Naive thymus-derived CD4-positive, alpha-beta T cell (primary cell): ENCODE measurements at regions of chr16 and their contacts with region 1.

Region 1: GRCh38 chr16:81035398-81035974 is at the start of gene ATMIN:
- DNase-seq: peak; percentile 80 to 96 (median 90)
- ATAC-seq: peak; percentile 100
- H3K4me3 ChIP-seq: peak within 1 kb of the TSS; percentile 52
- H3K4me3 Mint-ChIP-seq: peak within 1 kb of the TSS; percentile 79 to 92 (median 89)
- H3K27ac ChIP-seq: peak within 1 kb of the TSS; percentile 69
- H3K27ac Mint-ChIP-seq: peak within 1 kb of the TSS; percentile 29 to 87 (median 77)
- H3K4me1 ChIP-seq: peaks cover 20 to 24% of the 10 kb centered on the region in 2 donors
- H3K4me1 Mint-ChIP-seq: peaks cover 16 to 44% (median 39%) of the 10 kb centered on the region in 7 donors
- H3K27me3 ChIP-seq: no peaks in the 10 kb centered on the region
- H3K27me3 Mint-ChIP-seq: no peaks in the 10 kb centered on the region
- total RNA-seq, gene ATMIN: 29.1 to 46.9 (median 35.3) TPM

Region 2: DNA sequence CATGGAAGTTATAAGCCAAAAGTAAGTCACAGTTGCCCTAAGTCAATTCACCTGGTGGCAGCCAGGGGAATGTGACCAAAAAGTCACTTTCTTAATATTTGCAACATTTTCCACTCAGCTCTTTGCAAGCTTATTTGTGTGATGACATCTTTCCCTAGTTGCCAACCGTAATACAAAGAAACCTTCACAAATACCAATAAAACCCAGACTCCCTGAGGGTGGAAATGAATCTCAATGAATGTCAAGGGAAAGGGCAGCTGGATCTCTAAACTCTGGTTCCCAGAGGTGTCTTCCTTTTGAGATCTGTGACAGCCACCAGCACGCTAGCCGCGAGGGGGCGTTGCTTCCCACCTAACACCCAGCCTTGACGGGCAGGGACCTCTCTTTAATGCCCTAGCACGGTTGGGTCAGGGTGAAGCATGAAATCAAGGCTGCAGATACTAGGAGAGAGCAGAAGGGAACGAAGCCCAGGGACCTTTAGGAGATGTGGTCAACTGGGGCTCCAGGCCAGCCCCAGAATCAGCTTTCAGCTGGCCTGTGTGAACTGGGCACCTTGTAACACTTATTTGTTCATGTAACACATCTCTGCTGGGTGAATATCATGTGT is 111.0 kb before region 1 on chr16:
- CTCF ChIA-PET with region 1: no interaction called
- POLR2A ChIA-PET with region 1: no interaction called
- intact Hi-C with region 1: loop called in 1 of 2 experiments (anchors 1 kb)
- DNase-seq: peak in 4 of 9 donors; percentile 5 to 37 (median 14)
- ATAC-seq: no peak
- H3K4me3 ChIP-seq: no peak overlapping the region
- H3K4me3 Mint-ChIP-seq: no peak overlapping the region
- H3K27ac ChIP-seq: no peak overlapping the region
- H3K27ac Mint-ChIP-seq: no peak overlapping the region
- H3K4me1 ChIP-seq: no peaks in the 10 kb centered on the region
- H3K4me1 Mint-ChIP-seq: no peaks in the 10 kb centered on the region
- H3K27me3 ChIP-seq: no peaks in the 10 kb centered on the region
- H3K27me3 Mint-ChIP-seq: peaks cover 0 to 29% (median 22%) of the 10 kb centered on the region in 5 donors

Region 3: GRCh38 chr16:80947708-80948620 is 87.5 kb before region 1 on chr16:
- CTCF ChIA-PET with region 1: no interaction called
- POLR2A ChIA-PET with region 1: no interaction called
- intact Hi-C with region 1: no loop called
- DNase-seq: no peak
- ATAC-seq: no peak
- H3K4me3 ChIP-seq: no peak overlapping the region
- H3K4me3 Mint-ChIP-seq: no peak overlapping the region
- H3K27ac ChIP-seq: no peak overlapping the region
- H3K27ac Mint-ChIP-seq: no peak overlapping the region
- H3K4me1 ChIP-seq: no peaks in the 10 kb centered on the region
- H3K4me1 Mint-ChIP-seq: peaks cover 0 to 3% (median 0%) of the 10 kb centered on the region in 7 donors
- H3K27me3 ChIP-seq: no peaks in the 10 kb centered on the region
- H3K27me3 Mint-ChIP-seq: peaks cover 2 to 23% (median 13%) of the 10 kb centered on the region in 5 donors

Region 4: DNA sequence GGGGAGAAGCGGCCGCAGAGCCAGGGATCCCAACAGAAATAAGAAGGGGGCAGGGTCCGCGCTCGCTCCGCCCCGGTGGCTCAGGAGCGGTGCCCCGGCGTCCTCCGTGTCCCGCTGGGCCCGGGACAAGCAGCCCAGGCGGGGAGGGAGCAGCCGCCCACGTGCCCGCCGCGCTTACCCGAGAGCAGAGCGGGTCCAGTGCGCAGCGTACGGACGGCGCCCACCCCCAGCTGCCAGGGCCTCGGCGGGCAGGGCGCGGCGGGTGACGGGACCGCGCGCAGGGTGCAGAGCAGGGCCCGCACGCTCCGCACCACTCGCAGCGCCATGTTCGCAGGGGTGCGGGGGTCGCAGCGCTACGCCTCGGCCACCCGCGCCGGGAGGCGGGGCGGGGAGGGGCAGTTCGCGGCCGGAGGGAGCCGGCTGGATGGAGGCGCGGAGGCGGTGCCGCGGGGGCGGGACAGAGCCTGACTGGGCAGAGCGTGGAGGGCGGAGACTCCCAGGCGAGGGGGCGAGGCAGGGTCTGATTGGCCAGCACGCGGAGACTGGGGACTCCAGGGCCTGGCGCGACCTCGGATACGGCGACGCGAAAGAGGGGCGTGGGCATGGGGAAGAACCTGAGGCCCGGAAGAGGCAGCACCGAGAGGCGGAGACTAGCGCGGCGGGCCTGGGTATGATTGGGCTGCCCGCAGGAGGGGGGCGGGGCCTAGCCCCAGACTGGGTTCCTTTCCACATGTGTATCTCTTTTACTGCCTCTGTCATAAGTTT is 60.6 kb after region 1 on chr16 and contains the start of gene GCSH:
- CTCF ChIA-PET with region 1: interaction called, 3 read pairs
- POLR2A ChIA-PET with region 1: interaction called, 3 read pairs
- intact Hi-C with region 1: loop called (anchors 1 kb)
- DNase-seq: peak; percentile 94 to 99 (median 98)
- ATAC-seq: peak; percentile 98
- H3K4me3 ChIP-seq: peak within 1 kb of the TSS; percentile 71
- H3K4me3 Mint-ChIP-seq: peak within 1 kb of the TSS; percentile 72 to 93 (median 82)
- H3K27ac ChIP-seq: peak within 1 kb of the TSS; percentile 67
- H3K27ac Mint-ChIP-seq: peak within 1 kb of the TSS; percentile 45 to 87 (median 71)
- H3K4me1 ChIP-seq: peaks cover 0 to 6% of the 10 kb centered on the region in 2 donors
- H3K4me1 Mint-ChIP-seq: peaks cover 3 to 19% (median 9%) of the 10 kb centered on the region in 7 donors
- H3K27me3 ChIP-seq: no peaks in the 10 kb centered on the region
- H3K27me3 Mint-ChIP-seq: no peaks in the 10 kb centered on the region
- total RNA-seq, gene GCSH: 1.5 to 7.5 (median 4.9) TPM

Region 5: GRCh38 chr16:81214745-81215166 is 179.3 kb after region 1 on chr16:
- CTCF ChIA-PET with region 1: no interaction called
- POLR2A ChIA-PET with region 1: no interaction called
- intact Hi-C with region 1: loop called in 1 of 2 experiments (anchors 5 kb)
- DNase-seq: no peak
- ATAC-seq: no peak
- H3K4me3 ChIP-seq: no peak overlapping the region
- H3K4me3 Mint-ChIP-seq: no peak overlapping the region
- H3K27ac ChIP-seq: no peak overlapping the region
- H3K27ac Mint-ChIP-seq: peak overlapping the region in 1 of 9 donors; percentile 17
- H3K4me1 ChIP-seq: no peaks in the 10 kb centered on the region
- H3K4me1 Mint-ChIP-seq: peaks cover 0 to 2% (median 0%) of the 10 kb centered on the region in 7 donors
- H3K27me3 ChIP-seq: no peaks in the 10 kb centered on the region
- H3K27me3 Mint-ChIP-seq: peaks cover 4 to 27% (median 12%) of the 10 kb centered on the region in 5 donors